Heart right ventricle (tissue), 16 donors: ENCODE measurements at regions of chr10 and their contacts with region 1.

Region 1: GRCh38 chr10:129023082-129023481 is 444.0 kb upstream of the MGMT start:
- DNase-seq: peak; percentile 63 to 72
- ATAC-seq: peak; percentile 80 to 90 (median 86)
- H3K4me3 ChIP-seq: no peak overlapping the region
- H3K27ac ChIP-seq: peak overlapping the region in 5 of 10 donors; percentile 36 to 68 (median 59)
- H3K4me1 ChIP-seq: peaks cover 0 to 22% (median 10%) of the 10 kb centered on the region in 9 donors
- H3K27me3 ChIP-seq: peaks cover 0 to 15% (median 9%) of the 10 kb centered on the region in 7 donors
- CTCF ChIP-seq: no peak

Region 2: DNA sequence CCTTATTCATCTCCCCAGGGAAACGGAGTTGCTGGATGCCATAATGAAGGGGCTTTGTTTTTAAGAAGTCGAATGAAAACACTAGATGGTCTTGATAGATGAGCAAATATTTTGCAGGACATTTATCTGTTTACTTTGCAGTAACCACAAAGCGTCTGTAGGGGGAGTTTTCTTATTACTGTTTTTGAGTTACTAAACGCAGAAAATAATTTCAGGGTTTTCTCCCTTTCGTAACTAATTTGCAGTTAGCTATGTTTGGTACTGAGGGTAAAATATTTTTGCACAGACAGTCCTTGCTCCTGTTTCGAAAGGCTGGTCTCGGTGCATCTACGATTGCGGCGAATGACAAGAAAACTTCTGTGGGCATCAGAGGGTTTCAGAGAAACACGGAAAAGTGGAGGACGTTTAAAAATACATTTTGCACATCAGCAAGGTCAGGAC is 391.3 kb before region 1 on chr10:
- intact Hi-C with region 1: loop called in 2 of 10 experiments (anchors 10 kb)
- DNase-seq: peak in 1 of 2 donors; percentile 41
- ATAC-seq: peak in 1 of 8 donors; percentile 19
- H3K4me3 ChIP-seq: no peak overlapping the region
- H3K27ac ChIP-seq: no peak overlapping the region
- H3K4me1 ChIP-seq: peaks cover 0 to 16% (median 0%) of the 10 kb centered on the region in 9 donors
- H3K27me3 ChIP-seq: peaks cover 0 to 12% (median 4%) of the 10 kb centered on the region in 7 donors
- CTCF ChIP-seq: peak; percentile 56 to 73 (median 68)

Region 3: GRCh38 chr10:128859738-128860386 is 163.2 kb before region 1 on chr10:
- intact Hi-C with region 1: loop called in 1 of 10 experiments (anchors 10 kb)
- DNase-seq: peak in 1 of 2 donors; percentile 49
- ATAC-seq: no peak
- H3K4me3 ChIP-seq: no peak overlapping the region
- H3K27ac ChIP-seq: no peak overlapping the region
- H3K4me1 ChIP-seq: peaks cover 6 to 21% (median 12%) of the 10 kb centered on the region in 9 donors
- H3K27me3 ChIP-seq: no peaks in the 10 kb centered on the region
- CTCF ChIP-seq: peak; percentile 44 to 69 (median 62)

Region 4: GRCh38 chr10:128912568-128913311 is 110.3 kb before region 1 on chr10:
- intact Hi-C with region 1: loop called in 1 of 10 experiments (anchors 10 kb)
- DNase-seq: no peak
- ATAC-seq: no peak
- H3K4me3 ChIP-seq: no peak overlapping the region
- H3K27ac ChIP-seq: no peak overlapping the region
- H3K4me1 ChIP-seq: peaks cover 6 to 49% (median 18%) of the 10 kb centered on the region in 9 donors
- H3K27me3 ChIP-seq: peaks cover 0 to 10% (median 5%) of the 10 kb centered on the region in 7 donors
- CTCF ChIP-seq: no peak

Region 5: GRCh38 chr10:128922172-128922571 is 100.9 kb before region 1 on chr10:
- intact Hi-C with region 1: loop called in 3 of 10 experiments (anchors 5 to 10 kb)
- DNase-seq: no peak
- ATAC-seq: peak in 1 of 8 donors; percentile 65
- H3K4me3 ChIP-seq: no peak overlapping the region
- H3K27ac ChIP-seq: no peak overlapping the region
- H3K4me1 ChIP-seq: peaks cover 0 to 10% (median 3%) of the 10 kb centered on the region in 9 donors
- H3K27me3 ChIP-seq: peaks cover 0 to 5% (median 2%) of the 10 kb centered on the region in 7 donors
- CTCF ChIP-seq: no peak

Region 6: DNA sequence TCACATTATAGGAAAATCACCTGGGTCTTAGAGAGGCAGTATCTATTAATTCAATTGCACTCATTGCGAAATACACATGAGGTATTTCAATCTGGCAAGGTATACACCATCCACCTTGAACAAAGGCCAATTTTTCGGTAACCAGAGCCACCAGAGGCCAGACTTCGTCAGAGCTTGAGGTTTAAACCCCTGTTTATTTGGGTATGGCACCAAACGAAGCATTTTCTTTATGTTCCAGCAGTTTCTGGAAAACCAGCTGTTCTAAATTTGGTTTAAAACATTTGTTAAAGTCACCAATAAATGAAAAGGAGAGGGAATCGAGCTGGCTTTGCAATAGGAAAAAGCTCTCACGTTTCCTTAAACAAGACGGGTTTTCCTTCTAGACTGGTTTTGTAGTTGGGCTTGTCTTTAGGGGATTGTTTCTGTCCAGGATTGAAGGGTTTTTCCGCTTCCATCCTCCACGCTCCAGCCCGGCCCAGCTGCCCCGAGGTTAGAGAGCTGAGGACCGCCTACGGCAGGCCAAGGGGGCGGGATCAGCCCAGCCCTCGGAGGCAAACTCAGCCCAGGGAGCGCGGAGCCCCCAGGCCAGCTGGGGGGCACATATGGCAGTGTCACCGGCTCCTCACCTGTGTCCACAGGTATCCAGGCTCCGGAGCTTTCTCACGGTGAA is 95.5 kb before region 1 on chr10:
- intact Hi-C with region 1: loop called in 2 of 10 experiments (anchors 5 kb)
- DNase-seq: peak; percentile 60 to 72
- ATAC-seq: peak; percentile 72 to 86 (median 80)
- H3K4me3 ChIP-seq: no peak overlapping the region
- H3K27ac ChIP-seq: peak overlapping the region; percentile 24 to 76 (median 63)
- H3K4me1 ChIP-seq: peaks cover 0 to 40% (median 11%) of the 10 kb centered on the region in 9 donors
- H3K27me3 ChIP-seq: peaks cover 0 to 14% (median 0%) of the 10 kb centered on the region in 7 donors
- CTCF ChIP-seq: no peak